ENCODE measurements at regions of chr13 and their contacts with region 1.

Region 1: GRCh38 chr13:95968906-95969305 is 84.3 kb downstream of the UGGT2 start:
- DNase-seq: no peak
- H3K4me3 Mint-ChIP-seq: no peak overlapping the region
- H3K27ac Mint-ChIP-seq: no peak overlapping the region
- H3K4me1 Mint-ChIP-seq: no peaks in the 10 kb centered on the region
- H3K27me3 Mint-ChIP-seq: no peaks in the 10 kb centered on the region
- CTCF ChIP-seq: no peak

Region 2: DNA sequence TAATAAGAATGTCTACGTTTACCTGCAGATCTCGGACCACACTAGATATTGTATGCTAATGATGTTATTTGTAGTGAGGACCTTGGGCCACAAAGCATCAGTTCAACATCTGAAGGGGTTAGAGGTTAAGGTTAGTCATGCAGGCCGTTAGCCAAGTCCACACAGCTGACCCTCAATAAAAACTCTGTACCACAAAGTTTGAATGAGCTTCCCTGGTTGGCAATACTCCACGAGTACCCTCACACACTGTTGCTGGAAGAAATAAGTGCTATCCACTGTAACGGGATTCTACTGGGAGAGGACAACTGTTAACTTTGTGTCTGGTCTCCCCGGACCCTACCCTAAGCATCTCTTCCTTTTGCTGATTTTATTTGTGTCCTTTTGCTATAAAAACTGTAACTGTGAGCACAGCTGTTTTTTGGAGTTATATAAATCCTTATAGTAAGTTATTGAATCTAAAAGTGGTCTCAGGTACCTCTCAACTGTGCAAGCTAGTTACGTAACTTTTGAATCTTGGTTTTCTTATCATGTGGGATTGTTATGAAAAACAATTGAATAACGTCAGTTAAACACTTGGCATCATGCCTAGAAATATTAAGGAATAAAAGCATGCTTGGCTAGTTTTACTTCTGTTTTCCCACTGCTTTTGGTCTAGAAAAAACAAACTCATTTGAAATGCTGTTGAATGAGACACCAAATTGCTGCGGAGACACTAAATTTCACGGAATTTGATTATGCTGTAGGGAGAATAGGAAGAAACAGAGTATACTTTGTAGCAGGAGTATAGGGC is 110.4 kb before region 1 on chr13:
- CTCF ChIA-PET with region 1: no interaction called
- POLR2A ChIA-PET with region 1: no interaction called
- intact Hi-C with region 1: no loop called
- DNase-seq: peak; percentile 49
- H3K4me3 Mint-ChIP-seq: no peak overlapping the region
- H3K27ac Mint-ChIP-seq: no peak overlapping the region
- H3K4me1 Mint-ChIP-seq: peaks cover 5% of the 10 kb centered on the region
- H3K27me3 Mint-ChIP-seq: no peaks in the 10 kb centered on the region
- CTCF ChIP-seq: no peak

Region 3: DNA sequence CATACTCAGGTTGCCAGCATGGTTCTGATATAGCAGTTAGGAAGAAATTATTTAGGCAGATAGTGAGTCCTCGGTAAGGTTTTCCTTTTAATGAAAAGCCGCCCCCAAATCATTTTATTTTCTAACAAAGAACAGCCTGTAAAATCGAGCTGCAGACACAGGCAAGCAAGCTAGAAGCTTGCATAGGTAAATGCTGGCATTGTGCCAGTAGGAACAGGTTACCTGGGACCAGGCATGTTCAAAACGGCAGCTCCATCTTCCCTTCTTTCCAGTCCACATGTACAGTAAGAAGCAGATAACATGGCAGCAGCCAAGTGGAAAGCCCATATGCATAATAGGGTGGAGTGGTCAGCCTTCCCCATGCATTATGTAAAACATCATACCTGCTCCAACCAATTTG is 13.2 kb after region 1 on chr13:
- CTCF ChIA-PET with region 1: interaction called, 10 read pairs
- POLR2A ChIA-PET with region 1: interaction called, 4 read pairs
- intact Hi-C with region 1: no loop called
- DNase-seq: peak; percentile 8
- H3K4me3 Mint-ChIP-seq: no peak overlapping the region
- H3K27ac Mint-ChIP-seq: no peak overlapping the region
- H3K4me1 Mint-ChIP-seq: no peaks in the 10 kb centered on the region
- H3K27me3 Mint-ChIP-seq: no peaks in the 10 kb centered on the region
- CTCF ChIP-seq: no peak